ENCODE measurements at regions of chr3 and their contacts with region 1.

Region 1: DNA sequence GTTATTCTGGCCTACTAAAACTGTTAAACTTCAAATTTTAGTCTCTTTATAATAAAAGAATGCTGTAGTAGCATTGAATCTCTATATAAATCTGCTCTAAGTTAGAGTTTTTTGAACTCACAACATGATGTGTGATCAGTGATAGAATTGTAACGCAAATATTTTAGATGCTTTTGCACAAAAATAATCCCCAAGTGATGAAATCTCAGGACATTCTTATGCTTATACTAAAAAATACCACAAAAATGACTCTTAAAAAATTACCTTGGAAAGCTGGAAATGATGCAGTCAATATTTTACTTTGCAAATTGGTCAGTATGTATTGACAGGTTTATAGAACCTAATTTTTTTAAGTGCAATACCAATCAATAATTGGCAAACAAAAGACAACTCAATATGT is 375.3 kb downstream of the TBC1D5 start:
- DNase-seq: no peak
- H3K4me3 ChIP-seq: no peak overlapping the region
- H3K27ac ChIP-seq: no peak overlapping the region
- H3K4me1 ChIP-seq: no peaks in the 10 kb centered on the region
- H3K27me3 ChIP-seq: no peaks in the 10 kb centered on the region
- CTCF ChIP-seq: no peak
- POLR2A ChIP-seq: no peak

Region 2: DNA sequence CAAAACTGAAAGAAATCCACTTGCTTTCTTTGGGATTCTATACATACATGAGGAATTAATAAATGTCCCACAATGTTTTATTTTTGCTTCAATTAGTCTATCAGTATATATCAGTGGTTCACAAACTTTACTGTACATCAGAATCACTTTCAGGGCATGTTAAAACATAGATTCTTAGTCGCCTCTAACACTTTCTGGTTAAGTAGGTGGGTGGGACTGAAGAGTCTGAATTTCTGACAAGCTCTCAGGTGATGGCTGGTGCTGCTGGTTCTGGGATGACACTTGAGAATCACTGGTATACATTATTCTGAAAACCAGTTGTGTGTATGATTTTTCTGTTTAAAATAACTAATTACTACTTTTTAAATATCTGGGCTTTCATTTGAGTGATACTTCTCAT is 18.1 kb before region 1 on chr3:
- intact Hi-C with region 1: no loop called
- DNase-seq: no peak
- H3K4me3 ChIP-seq: no peak overlapping the region
- H3K27ac ChIP-seq: no peak overlapping the region
- H3K4me1 ChIP-seq: no peaks in the 10 kb centered on the region
- H3K27me3 ChIP-seq: no peaks in the 10 kb centered on the region
- CTCF ChIP-seq: no peak
- POLR2A ChIP-seq: no peak

Region 3: DNA sequence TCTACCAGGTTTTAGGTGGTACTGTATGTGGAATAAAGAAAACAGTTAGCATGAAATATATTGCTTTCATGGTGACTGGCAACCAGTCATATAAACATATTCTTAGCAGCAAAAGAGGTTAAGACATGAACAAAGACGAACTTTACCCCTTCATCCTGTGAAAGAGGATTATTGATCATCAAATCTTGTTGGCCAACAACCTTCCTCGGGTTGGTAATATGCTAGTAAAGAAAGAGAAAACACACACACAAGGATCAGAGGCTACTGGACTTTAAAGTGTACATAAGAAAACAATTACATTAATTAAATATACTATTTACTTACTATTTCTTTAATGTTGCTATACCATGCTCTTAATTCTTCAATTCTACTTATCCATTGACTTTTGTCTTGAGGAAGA is 37.4 kb after region 1 on chr3:
- intact Hi-C with region 1: loop called (anchors 2 kb)
- DNase-seq: no peak
- H3K4me3 ChIP-seq: no peak overlapping the region
- H3K27ac ChIP-seq: no peak overlapping the region
- H3K4me1 ChIP-seq: no peaks in the 10 kb centered on the region
- H3K27me3 ChIP-seq: no peaks in the 10 kb centered on the region
- CTCF ChIP-seq: no peak
- POLR2A ChIP-seq: no peak

Region 4: DNA sequence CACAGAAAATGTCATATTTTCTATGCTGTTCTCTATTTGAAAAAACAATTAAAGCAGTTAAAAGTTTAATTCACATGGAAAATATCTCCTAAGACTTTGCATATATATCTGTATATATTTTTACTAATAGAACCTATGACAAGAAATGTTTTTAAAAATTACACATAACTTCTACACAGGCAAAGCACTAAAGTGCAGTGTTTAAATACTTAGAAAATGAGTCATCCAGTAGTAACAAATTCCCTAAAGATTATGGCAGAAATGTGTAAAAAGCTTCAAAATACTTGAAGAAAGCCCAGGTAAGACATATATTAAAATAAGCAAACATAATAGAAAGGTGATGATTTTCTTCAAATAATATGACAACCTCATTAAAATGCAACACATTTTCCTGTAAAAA is 138.7 kb after region 1 on chr3:
- intact Hi-C with region 1: no loop called
- DNase-seq: no peak
- H3K4me3 ChIP-seq: no peak overlapping the region
- H3K27ac ChIP-seq: no peak overlapping the region
- H3K4me1 ChIP-seq: no peaks in the 10 kb centered on the region
- H3K27me3 ChIP-seq: no peaks in the 10 kb centered on the region
- CTCF ChIP-seq: no peak
- POLR2A ChIP-seq: no peak

Region 5: GRCh38 chr3:19213601-19214220 is 1846.5 kb after region 1 on chr3:
- intact Hi-C with region 1: no loop called
- DNase-seq: no peak
- H3K4me3 ChIP-seq: no peak overlapping the region
- H3K27ac ChIP-seq: no peak overlapping the region
- H3K4me1 ChIP-seq: no peaks in the 10 kb centered on the region
- H3K27me3 ChIP-seq: no peaks in the 10 kb centered on the region
- CTCF ChIP-seq: no peak
- POLR2A ChIP-seq: no peak